SK-N-SH (cell line): ENCODE measurements at regions of chr3 and their contacts with region 1.

Region 1: GRCh38 chr3:66138336-66139313 is 82.2 kb upstream of the SLC25A26 start:
- DNase-seq: peak; percentile 72
- H3K4me3 ChIP-seq: no peak overlapping the region
- H3K27ac ChIP-seq: no peak overlapping the region
- H3K4me1 ChIP-seq: peaks cover 5% of the 10 kb centered on the region in 2 experiments; a peak in 3 of 4 replicates
- H3K27me3 ChIP-seq: no peaks in the 10 kb centered on the region
- CTCF ChIP-seq: peak; percentile 89
- EP300 ChIP-seq: no peak
- RAD21 ChIP-seq: peak; percentile 97

Region 2: GRCh38 chr3:65793495-65794199 is 345.0 kb before region 1 on chr3:
- CTCF ChIA-PET with region 1: interaction called, 70 read pairs
- POLR2A ChIA-PET with region 1: no interaction called
- DNase-seq: no peak
- H3K4me3 ChIP-seq: no peak overlapping the region
- H3K27ac ChIP-seq: no peak overlapping the region
- H3K4me1 ChIP-seq: no peaks in the 10 kb centered on the region
- H3K27me3 ChIP-seq: no peaks in the 10 kb centered on the region
- CTCF ChIP-seq: no peak
- EP300 ChIP-seq: no peak
- RAD21 ChIP-seq: no peak

Region 3: DNA sequence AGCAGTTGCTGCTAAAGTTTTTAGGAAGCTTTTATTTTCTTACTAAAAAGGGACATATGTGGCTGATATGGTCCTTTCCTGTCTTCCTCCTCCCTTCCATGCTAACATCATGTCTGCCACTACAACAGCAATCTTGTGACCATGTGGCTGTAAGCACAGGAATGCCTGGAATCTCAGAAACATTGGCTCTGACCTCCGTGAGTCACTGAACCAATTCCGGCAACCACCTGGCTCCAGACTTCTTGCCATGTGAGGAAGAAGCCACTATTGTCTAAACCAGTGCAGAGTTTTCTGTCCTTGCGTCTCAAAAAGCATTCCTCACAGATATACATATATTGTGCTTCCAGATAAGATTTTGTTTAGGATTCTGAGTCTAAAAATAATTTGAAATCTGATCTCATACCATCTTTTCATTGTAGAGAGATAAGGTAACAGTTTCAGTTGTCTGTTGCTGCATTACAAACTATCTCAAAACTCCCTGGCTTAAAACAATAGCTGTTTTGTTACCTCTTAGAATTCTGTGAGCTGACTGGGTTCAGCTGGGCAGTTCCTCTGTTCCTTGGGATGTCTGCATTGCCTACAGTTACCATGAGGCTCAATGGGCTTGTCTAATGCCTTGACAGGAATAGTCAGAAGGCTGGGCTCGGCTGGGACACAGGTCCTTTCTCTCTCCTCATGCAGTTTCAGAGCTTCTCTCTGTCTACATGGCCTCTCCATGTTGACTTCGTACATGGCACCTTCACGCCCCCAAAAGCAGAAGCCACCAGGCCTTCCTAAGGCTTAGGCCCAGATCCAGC is 22.6 kb before region 1 on chr3:
- CTCF ChIA-PET with region 1: interaction called, 19 read pairs
- POLR2A ChIA-PET with region 1: no interaction called
- DNase-seq: peak; percentile 19
- H3K4me3 ChIP-seq: peak overlapping the region in 1 of 2 experiments; percentile 0; a peak in 1 of 4 replicates
- H3K27ac ChIP-seq: peak overlapping the region; percentile 80 to 88
- H3K4me1 ChIP-seq: peaks cover 3 to 18% of the 10 kb centered on the region in 2 experiments
- H3K27me3 ChIP-seq: no peaks in the 10 kb centered on the region
- CTCF ChIP-seq: no peak
- EP300 ChIP-seq: peak; percentile 11 to 95; a peak in 2 of 4 replicates
- RAD21 ChIP-seq: no peak

Region 4: GRCh38 chr3:66153481-66154443 is 15.1 kb after region 1 on chr3:
- CTCF ChIA-PET with region 1: interaction called, 40 read pairs
- POLR2A ChIA-PET with region 1: no interaction called
- DNase-seq: peak; percentile 45
- H3K4me3 ChIP-seq: peak overlapping the region; percentile 37
- H3K27ac ChIP-seq: no peak overlapping the region
- H3K4me1 ChIP-seq: peaks cover 0 to 9% of the 10 kb centered on the region in 2 experiments; a peak in 1 of 4 replicates
- H3K27me3 ChIP-seq: no peaks in the 10 kb centered on the region
- CTCF ChIP-seq: no peak
- EP300 ChIP-seq: no peak
- RAD21 ChIP-seq: no peak

Region 5: GRCh38 chr3:66544619-66545429 is 406.2 kb after region 1 on chr3:
- CTCF ChIA-PET with region 1: no interaction called
- POLR2A ChIA-PET with region 1: no interaction called
- DNase-seq: no peak
- H3K4me3 ChIP-seq: no peak overlapping the region
- H3K27ac ChIP-seq: no peak overlapping the region
- H3K4me1 ChIP-seq: no peaks in the 10 kb centered on the region
- H3K27me3 ChIP-seq: no peaks in the 10 kb centered on the region
- CTCF ChIP-seq: no peak
- EP300 ChIP-seq: no peak
- RAD21 ChIP-seq: no peak

Region 6: GRCh38 chr3:66673293-66673692 is 534.7 kb after region 1 on chr3:
- CTCF ChIA-PET with region 1: no interaction called
- POLR2A ChIA-PET with region 1: no interaction called
- DNase-seq: no peak
- H3K4me3 ChIP-seq: no peak overlapping the region
- H3K27ac ChIP-seq: no peak overlapping the region
- H3K4me1 ChIP-seq: no peaks in the 10 kb centered on the region
- H3K27me3 ChIP-seq: no peaks in the 10 kb centered on the region
- CTCF ChIP-seq: no peak
- EP300 ChIP-seq: no peak
- RAD21 ChIP-seq: no peak